Ascending aorta (tissue), 2 donors: ENCODE measurements at regions of chr3 and their contacts with region 1.

Region 1: DNA sequence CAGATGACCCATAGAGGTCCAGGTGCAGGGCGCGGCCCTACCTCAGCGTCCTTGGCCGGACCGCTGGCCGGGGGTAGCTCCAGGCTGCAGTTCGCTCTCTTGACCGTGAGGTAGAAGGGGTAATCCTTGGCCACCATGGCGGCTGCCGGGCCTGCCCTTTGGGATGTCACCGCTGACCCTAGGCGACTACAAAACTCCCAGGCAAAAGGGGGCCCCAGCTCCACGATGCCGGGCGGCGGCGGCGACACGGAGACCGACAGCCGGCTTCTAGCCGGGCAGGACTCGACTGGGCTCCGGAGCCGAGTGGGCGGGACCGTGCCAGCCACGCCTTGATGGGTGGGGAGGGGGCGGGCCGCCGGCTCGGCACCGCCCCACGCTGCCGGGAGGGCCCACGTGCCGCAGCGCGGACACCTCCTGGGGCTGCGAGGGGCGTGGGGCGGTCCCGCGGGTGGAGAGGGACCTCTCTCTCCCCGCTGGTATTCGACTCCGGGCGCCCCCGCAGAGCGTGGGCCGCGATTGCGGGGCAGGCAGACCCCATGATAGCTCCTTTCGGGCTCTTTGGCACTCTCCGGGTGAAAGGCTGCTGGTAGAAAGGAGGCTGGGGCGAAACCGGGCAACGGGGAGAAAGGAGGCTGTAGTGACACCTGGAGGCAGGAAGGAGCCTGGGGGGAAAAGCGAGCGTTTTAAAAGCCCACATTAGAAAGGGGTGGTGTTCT is at the start of gene ARHGEF3:
- DNase-seq: peak; percentile 25 to 86
- H3K4me3 ChIP-seq: peak within 1 kb of the TSS; percentile 55 to 85
- H3K27ac ChIP-seq: no peak within 1 kb of the TSS
- H3K4me1 ChIP-seq: peaks cover 0 to 9% of the 10 kb centered on the region in 2 donors
- H3K27me3 ChIP-seq: no peaks in the 10 kb centered on the region
- CTCF ChIP-seq: peak in 1 of 3 experiments; percentile 42
- total RNA-seq, gene ARHGEF3: 16.8 TPM

Region 2: GRCh38 chr3:56682462-56683121 is 119.2 kb before region 1 on chr3:
- intact Hi-C with region 1: loop called (anchors 5 kb)
- DNase-seq: peak in 1 of 2 donors; percentile 82
- H3K4me3 ChIP-seq: peak overlapping the region; percentile 74 to 82
- H3K27ac ChIP-seq: peak overlapping the region; percentile 95 to 99
- H3K4me1 ChIP-seq: peaks cover 0 to 3% of the 10 kb centered on the region in 2 donors
- H3K27me3 ChIP-seq: no peaks in the 10 kb centered on the region
- CTCF ChIP-seq: no peak

Region 3: GRCh38 chr3:56702490-56703315 is 99.1 kb before region 1 on chr3:
- intact Hi-C with region 1: loop called (anchors 2 kb)
- DNase-seq: peak in 1 of 2 donors; percentile 70
- H3K4me3 ChIP-seq: no peak overlapping the region
- H3K27ac ChIP-seq: no peak overlapping the region
- H3K4me1 ChIP-seq: no peaks in the 10 kb centered on the region
- H3K27me3 ChIP-seq: no peaks in the 10 kb centered on the region
- CTCF ChIP-seq: peak; percentile 74 to 91 (median 86)

Region 4: GRCh38 chr3:56988458-56989168 is 186.8 kb after region 1 on chr3:
- intact Hi-C with region 1: loop called (anchors 2 kb)
- DNase-seq: peak in 1 of 2 donors; percentile 84
- H3K4me3 ChIP-seq: no peak overlapping the region
- H3K27ac ChIP-seq: no peak overlapping the region
- H3K4me1 ChIP-seq: peaks cover 0 to 10% of the 10 kb centered on the region in 2 donors
- H3K27me3 ChIP-seq: no peaks in the 10 kb centered on the region
- CTCF ChIP-seq: peak; percentile 72 to 88 (median 73)

Region 5: GRCh38 chr3:57221883-57222282 is 420.1 kb after region 1 on chr3:
- intact Hi-C with region 1: no loop called
- DNase-seq: no peak
- H3K4me3 ChIP-seq: no peak overlapping the region
- H3K27ac ChIP-seq: no peak overlapping the region
- H3K4me1 ChIP-seq: no peaks in the 10 kb centered on the region
- H3K27me3 ChIP-seq: no peaks in the 10 kb centered on the region
- CTCF ChIP-seq: no peak